IMR-90 (cell line): ENCODE measurements at regions of chr11 and their contacts with region 1.

Region 1: GRCh38 chr11:110518809-110519514 is 89.2 kb downstream of the FDX1 start:
- DNase-seq: no peak
- ATAC-seq: peak; percentile 53
- H3K4me3 ChIP-seq: no peak overlapping the region
- H3K27ac ChIP-seq: no peak overlapping the region
- H3K4me1 ChIP-seq: peaks cover 5% of the 10 kb centered on the region
- H3K27me3 ChIP-seq: no peaks in the 10 kb centered on the region
- CTCF ChIP-seq: no peak
- POLR2A ChIP-seq: no peak
- RAD21 ChIP-seq: no peak

Region 2: DNA sequence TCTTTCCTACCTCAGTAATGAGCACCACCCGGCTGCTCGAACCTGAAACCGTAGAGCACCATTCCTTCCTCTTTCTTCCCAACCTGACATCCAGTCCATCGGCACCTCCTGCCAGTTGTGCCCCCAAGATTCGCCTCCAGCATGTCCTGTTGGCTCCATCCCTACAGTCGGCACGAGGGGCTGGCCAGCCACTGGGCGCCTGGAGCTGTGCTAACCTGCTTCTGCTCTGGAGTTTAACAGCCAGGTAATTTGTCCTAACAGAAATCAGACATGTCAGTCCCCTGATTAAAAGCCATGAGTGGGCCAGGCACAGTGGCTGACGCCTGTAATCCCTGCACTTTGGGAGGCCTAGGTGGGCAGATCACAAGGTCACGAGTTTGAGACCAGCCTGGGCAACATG is 72.4 kb before region 1 on chr11:
- CTCF ChIA-PET with region 1: no interaction called
- POLR2A ChIA-PET with region 1: interaction called, 11 read pairs
- dilution Hi-C with region 1: no loop called
- in situ Hi-C with region 1: no loop called
- intact Hi-C with region 1: no loop called
- DNase-seq: no peak
- ATAC-seq: no peak
- H3K4me3 ChIP-seq: no peak overlapping the region
- H3K27ac ChIP-seq: no peak overlapping the region
- H3K4me1 ChIP-seq: no peaks in the 10 kb centered on the region
- H3K27me3 ChIP-seq: no peaks in the 10 kb centered on the region
- CTCF ChIP-seq: no peak
- POLR2A ChIP-seq: no peak
- RAD21 ChIP-seq: no peak